GM12878 (cell line): ENCODE measurements at regions of chr9 and their contacts with region 1.

Region 1: GRCh38 chr9:36517131-36517530 is 55.6 kb upstream of the MELK start:
- DNase-seq: no peak
- ATAC-seq: no peak
- H3K4me3 ChIP-seq: no peak overlapping the region
- H3K27ac ChIP-seq: no peak overlapping the region
- H3K4me1 ChIP-seq: no peaks in the 10 kb centered on the region
- H3K27me3 ChIP-seq: no peaks in the 10 kb centered on the region
- CTCF ChIP-seq: no peak
- EP300 ChIP-seq: no peak
- POLR2A ChIP-seq: no peak
- RAD21 ChIP-seq: no peak

Region 2: DNA sequence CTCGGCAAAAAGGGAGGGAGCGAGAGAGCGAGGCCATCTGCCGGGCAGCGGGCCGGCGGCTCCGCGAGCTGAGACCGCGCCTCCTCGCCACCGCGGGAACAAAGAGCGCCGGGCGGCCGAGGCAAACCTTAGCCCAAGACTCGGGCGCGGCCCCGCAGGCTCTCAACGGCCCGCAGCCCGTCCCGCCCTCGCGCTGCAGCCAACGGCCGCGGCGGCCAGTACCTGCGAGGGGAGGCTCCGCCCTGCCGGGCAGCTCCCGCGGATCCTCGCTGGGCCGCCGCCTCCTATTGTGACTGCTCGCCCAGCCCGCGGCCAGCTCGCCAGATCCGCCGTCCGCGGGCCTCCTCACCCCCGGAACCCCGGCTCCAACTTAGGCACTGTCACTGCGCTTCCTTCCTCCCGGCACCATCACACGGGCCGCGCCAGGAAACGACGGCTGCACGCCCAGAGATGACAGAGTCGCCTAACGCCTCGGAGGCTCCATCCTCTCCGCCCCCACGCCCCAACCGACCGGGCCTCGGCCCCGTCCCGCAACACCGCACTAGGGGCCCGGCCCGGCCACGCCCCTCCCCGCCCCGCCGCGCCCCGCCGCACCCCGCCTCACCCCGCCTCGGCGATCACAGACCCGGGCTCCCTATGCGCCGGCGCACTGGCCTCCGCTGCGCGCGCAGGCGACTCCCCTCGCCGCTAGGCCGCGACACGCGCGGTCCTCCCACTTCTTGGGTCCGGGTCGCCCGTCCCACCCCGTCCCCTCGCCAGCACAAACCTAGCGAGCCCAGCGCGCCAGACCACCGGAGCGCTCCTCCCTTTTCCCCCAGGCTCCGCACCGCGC is 116.6 kb before region 1 on chr9:
- CTCF ChIA-PET with region 1: no interaction called
- POLR2A ChIA-PET with region 1: no interaction called
- RAD21 ChIA-PET with region 1: no interaction called
- SMC1A ChIA-PET with region 1: no interaction called
- in situ Hi-C with region 1: no loop called
- intact Hi-C with region 1: no loop called
- DNase-seq: peak; percentile 42
- ATAC-seq: peak; percentile 90
- H3K4me3 ChIP-seq: peak overlapping the region; percentile 76
- H3K27ac ChIP-seq: peak overlapping the region; percentile 89
- H3K4me1 ChIP-seq: peaks cover 13% of the 10 kb centered on the region
- H3K27me3 ChIP-seq: no peaks in the 10 kb centered on the region
- CTCF ChIP-seq: 0 out of 6 replicates have a peak, but pooled peaks of 1 of the 3 experiments have one; percentile 3
- EP300 ChIP-seq: no peak; a peak in 1 of 4 replicates
- POLR2A ChIP-seq: peak; percentile 88
- RAD21 ChIP-seq: no peak

Region 3: GRCh38 chr9:36499174-36499890 is 17.8 kb before region 1 on chr9:
- CTCF ChIA-PET with region 1: no interaction called
- POLR2A ChIA-PET with region 1: no interaction called
- RAD21 ChIA-PET with region 1: no interaction called
- SMC1A ChIA-PET with region 1: no interaction called
- in situ Hi-C with region 1: no loop called
- intact Hi-C with region 1: loop called (anchors 2 kb)
- DNase-seq: no peak
- ATAC-seq: no peak
- H3K4me3 ChIP-seq: no peak overlapping the region
- H3K27ac ChIP-seq: no peak overlapping the region
- H3K4me1 ChIP-seq: no peaks in the 10 kb centered on the region; the same call in 1 of the 2 replicates
- H3K27me3 ChIP-seq: no peaks in the 10 kb centered on the region; a peak in 1 of 4 replicates
- CTCF ChIP-seq: no peak
- EP300 ChIP-seq: no peak
- POLR2A ChIP-seq: no peak
- RAD21 ChIP-seq: no peak

Region 4: GRCh38 chr9:36535107-36535506 is 18.0 kb after region 1 on chr9:
- CTCF ChIA-PET with region 1: no interaction called
- POLR2A ChIA-PET with region 1: no interaction called
- RAD21 ChIA-PET with region 1: no interaction called
- SMC1A ChIA-PET with region 1: no interaction called
- in situ Hi-C with region 1: no loop called
- intact Hi-C with region 1: no loop called
- DNase-seq: no peak
- ATAC-seq: no peak
- H3K4me3 ChIP-seq: no peak overlapping the region
- H3K27ac ChIP-seq: no peak overlapping the region
- H3K4me1 ChIP-seq: no peaks in the 10 kb centered on the region
- H3K27me3 ChIP-seq: no peaks in the 10 kb centered on the region
- CTCF ChIP-seq: no peak
- EP300 ChIP-seq: no peak
- POLR2A ChIP-seq: no peak
- RAD21 ChIP-seq: no peak

Region 5: DNA sequence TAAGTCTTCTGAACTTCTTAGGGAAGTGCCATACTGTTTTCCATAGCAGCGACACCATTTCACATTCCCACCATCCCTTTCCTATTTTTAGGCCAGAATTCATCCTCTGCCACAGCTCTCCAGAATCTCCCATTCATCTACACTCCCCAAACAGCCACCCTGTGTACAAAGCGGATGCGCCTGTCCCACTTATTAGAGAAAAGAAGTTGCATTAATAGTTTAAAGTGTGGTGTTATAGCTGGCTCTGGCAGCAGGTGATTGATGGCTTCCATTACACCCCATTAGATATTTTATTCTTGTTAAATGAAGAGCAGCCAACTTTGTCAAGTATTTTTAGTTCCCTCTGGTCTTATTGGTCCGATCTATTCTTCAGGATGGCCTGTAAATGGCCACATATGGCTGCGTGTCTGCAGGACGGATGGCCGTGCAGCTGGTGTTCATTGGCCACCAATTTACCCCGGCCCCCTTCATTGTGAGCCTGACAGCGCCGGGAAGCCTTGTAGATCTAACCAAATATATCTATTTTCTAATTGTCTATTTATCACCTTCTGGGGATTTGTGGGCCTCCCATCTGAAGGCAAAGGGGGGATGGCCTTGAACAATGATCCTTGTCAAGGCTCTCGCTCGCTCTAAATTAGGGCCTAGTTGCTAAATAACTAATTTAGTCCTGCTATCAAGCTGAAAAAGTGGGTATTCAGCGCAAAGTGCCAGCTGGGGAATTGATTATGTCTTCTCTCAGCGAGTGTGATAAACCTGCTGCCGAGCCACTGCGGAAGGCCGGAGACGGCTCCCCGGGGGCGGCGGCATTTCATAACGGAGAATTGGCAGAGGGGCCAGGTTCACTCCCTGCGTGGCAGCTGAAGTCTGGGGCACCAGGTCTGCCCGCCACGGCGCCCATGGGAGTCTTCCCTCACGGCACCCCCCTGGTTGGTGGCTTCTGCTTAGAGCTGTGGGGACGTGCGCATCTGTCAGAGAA is 196.7 kb after region 1 on chr9:
- CTCF ChIA-PET with region 1: no interaction called
- POLR2A ChIA-PET with region 1: no interaction called
- RAD21 ChIA-PET with region 1: no interaction called
- SMC1A ChIA-PET with region 1: no interaction called
- in situ Hi-C with region 1: no loop called
- intact Hi-C with region 1: no loop called
- DNase-seq: no peak
- ATAC-seq: no peak
- H3K4me3 ChIP-seq: no peak overlapping the region
- H3K27ac ChIP-seq: no peak overlapping the region
- H3K4me1 ChIP-seq: no peaks in the 10 kb centered on the region
- H3K27me3 ChIP-seq: no peaks in the 10 kb centered on the region
- CTCF ChIP-seq: no peak
- EP300 ChIP-seq: no peak
- POLR2A ChIP-seq: no peak
- RAD21 ChIP-seq: no peak

Region 6: DNA sequence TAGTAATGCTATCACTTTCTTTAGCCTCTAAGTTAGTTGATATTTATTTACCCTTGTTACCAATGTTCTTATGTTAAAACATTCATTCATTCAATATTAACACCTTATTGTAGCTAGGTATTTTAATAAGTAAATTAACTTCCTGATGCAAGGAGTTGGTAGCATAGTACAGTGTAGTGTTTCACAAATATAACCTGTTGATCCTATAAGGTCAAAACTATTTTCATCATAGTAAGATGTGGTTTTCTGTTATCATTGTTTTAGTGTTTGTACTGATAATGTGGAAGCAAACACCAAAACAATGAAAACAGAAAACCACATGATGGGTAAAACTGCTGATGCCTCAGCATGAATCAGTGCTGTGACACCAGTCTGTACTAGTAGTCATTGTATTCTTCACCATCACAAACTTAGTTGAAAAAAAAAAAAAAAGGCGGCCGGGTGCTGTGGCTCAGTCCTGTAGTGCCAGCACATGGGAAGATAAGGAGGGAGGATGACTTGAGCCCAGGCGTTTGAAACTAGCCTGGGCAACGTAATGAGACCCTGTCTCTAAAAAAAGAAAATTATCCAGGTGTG is 639.7 kb after region 1 on chr9:
- CTCF ChIA-PET with region 1: no interaction called
- POLR2A ChIA-PET with region 1: no interaction called
- RAD21 ChIA-PET with region 1: no interaction called
- SMC1A ChIA-PET with region 1: no interaction called
- in situ Hi-C with region 1: no loop called
- intact Hi-C with region 1: no loop called
- DNase-seq: no peak
- ATAC-seq: peak; percentile 77
- H3K4me3 ChIP-seq: no peak overlapping the region
- H3K27ac ChIP-seq: no peak overlapping the region
- H3K4me1 ChIP-seq: peaks cover 8% of the 10 kb centered on the region; the same call in 1 of the 2 replicates
- H3K27me3 ChIP-seq: no peaks in the 10 kb centered on the region
- CTCF ChIP-seq: no peak
- EP300 ChIP-seq: 0 out of 4 replicates have a peak, but pooled peaks of 1 of the 2 experiments have one; percentile 13
- POLR2A ChIP-seq: no peak
- RAD21 ChIP-seq: no peak